CD4-positive, alpha-beta memory T cell (primary cell): ENCODE measurements at regions of chr12 and their contacts with region 1.

Region 1: GRCh38 chr12:5988659-5989116 is 43.6 kb upstream of the ANO2 start:
- DNase-seq: peak; percentile 47 to 60 (median 55)
- H3K4me3 ChIP-seq: no peak overlapping the region
- H3K4me3 Mint-ChIP-seq: no peak overlapping the region
- H3K27ac ChIP-seq: no peak overlapping the region
- H3K27ac Mint-ChIP-seq: no peak overlapping the region
- H3K4me1 ChIP-seq: no peaks in the 10 kb centered on the region
- H3K4me1 Mint-ChIP-seq: peaks cover 0 to 2% (median 0%) of the 10 kb centered on the region in 4 donors
- H3K27me3 ChIP-seq: no peaks in the 10 kb centered on the region
- H3K27me3 Mint-ChIP-seq: peaks cover 3 to 6% of the 10 kb centered on the region in 2 donors

Region 2: DNA sequence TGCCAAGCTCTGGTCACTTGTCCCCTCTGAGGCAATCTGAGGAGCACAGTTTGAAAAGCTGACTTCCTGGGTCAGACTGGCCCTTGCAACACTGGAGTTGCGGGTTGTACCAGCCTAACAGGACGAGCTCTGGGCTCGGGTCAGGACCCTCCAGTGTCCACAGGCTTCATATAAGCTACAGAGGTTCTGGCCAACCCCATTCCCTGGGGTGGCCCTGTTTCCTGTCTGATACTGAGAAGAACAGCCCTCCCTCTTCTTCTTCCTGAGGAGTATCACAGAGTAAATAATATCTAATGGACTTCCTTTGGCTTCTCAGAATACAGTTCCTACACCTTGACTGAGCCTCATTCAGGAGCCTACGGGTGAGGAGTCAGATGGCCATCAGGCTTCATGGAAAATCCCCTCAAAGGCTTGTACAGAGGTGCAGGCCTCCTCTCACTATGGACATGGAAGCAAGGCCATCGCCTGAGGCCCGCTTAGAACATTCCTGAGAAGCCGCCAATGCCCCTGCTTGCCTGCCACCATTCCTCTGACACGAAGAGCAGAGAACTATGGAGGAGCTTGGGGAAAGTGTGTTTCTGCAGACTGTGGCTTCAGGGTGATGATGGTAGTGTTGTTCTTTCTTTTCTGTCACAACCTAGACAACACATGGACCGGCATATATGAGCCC is 15.1 kb before region 1 on chr12:
- CTCF ChIA-PET with region 1: interaction called, 15 read pairs
- POLR2A ChIA-PET with region 1: no interaction called
- intact Hi-C with region 1: no loop called
- DNase-seq: no peak
- H3K4me3 ChIP-seq: no peak overlapping the region
- H3K4me3 Mint-ChIP-seq: no peak overlapping the region
- H3K27ac ChIP-seq: no peak overlapping the region
- H3K27ac Mint-ChIP-seq: no peak overlapping the region
- H3K4me1 ChIP-seq: no peaks in the 10 kb centered on the region
- H3K4me1 Mint-ChIP-seq: no peaks in the 10 kb centered on the region
- H3K27me3 ChIP-seq: no peaks in the 10 kb centered on the region
- H3K27me3 Mint-ChIP-seq: peaks cover 27 to 44% of the 10 kb centered on the region in 2 donors

Region 3: GRCh38 chr12:6039894-6040568 is 51.3 kb after region 1 on chr12:
- CTCF ChIA-PET with region 1: interaction called, 186 read pairs
- POLR2A ChIA-PET with region 1: no interaction called
- intact Hi-C with region 1: loop called (anchors 1 kb)
- DNase-seq: peak in 4 of 5 donors; percentile 41 to 55 (median 48)
- H3K4me3 ChIP-seq: no peak overlapping the region
- H3K4me3 Mint-ChIP-seq: peak overlapping the region in 3 of 8 donors; percentile 8 to 64 (median 13)
- H3K27ac ChIP-seq: no peak overlapping the region
- H3K27ac Mint-ChIP-seq: no peak overlapping the region
- H3K4me1 ChIP-seq: no peaks in the 10 kb centered on the region
- H3K4me1 Mint-ChIP-seq: peaks cover 0 to 2% (median under 1%) of the 10 kb centered on the region in 4 donors
- H3K27me3 ChIP-seq: no peaks in the 10 kb centered on the region
- H3K27me3 Mint-ChIP-seq: peaks cover 6 to 13% of the 10 kb centered on the region in 2 donors

Region 4: GRCh38 chr12:6278439-6279255 is 290.0 kb after region 1 on chr12:
- CTCF ChIA-PET with region 1: interaction called, 45 read pairs
- POLR2A ChIA-PET with region 1: no interaction called
- intact Hi-C with region 1: no loop called
- DNase-seq: peak; percentile 74 to 88 (median 81)
- H3K4me3 ChIP-seq: peak overlapping the region in 1 of 2 donors; percentile 43
- H3K4me3 Mint-ChIP-seq: peak overlapping the region; percentile 61 to 86 (median 80)
- H3K27ac ChIP-seq: no peak overlapping the region
- H3K27ac Mint-ChIP-seq: peak overlapping the region in 1 of 7 donors; percentile 54
- H3K4me1 ChIP-seq: peaks cover 11% of the 10 kb centered on the region
- H3K4me1 Mint-ChIP-seq: peaks cover 2 to 10% (median 4%) of the 10 kb centered on the region in 4 donors
- H3K27me3 ChIP-seq: no peaks in the 10 kb centered on the region
- H3K27me3 Mint-ChIP-seq: peaks cover 9 to 34% of the 10 kb centered on the region in 2 donors

Region 5: DNA sequence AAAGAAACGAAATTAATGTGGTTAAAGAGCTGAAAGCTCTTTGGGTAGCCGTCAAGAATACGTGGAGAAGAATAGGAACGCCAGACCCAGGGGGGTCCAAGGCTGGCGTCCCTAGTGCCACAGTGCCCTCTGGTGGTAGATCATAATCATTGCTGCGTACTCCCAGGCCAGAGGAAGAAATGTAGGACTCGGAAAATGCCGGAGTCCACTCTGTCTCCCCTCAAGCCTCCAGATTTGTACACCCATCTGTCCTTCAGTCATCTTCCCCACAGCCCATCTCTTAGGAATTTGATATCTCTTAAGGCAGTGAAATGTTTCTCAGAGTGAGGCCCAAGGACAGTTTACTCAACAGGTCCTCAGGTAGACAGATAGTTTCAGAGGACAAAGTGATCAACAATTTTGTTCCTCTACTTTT is 296.4 kb after region 1 on chr12:
- CTCF ChIA-PET with region 1: interaction called, 45 read pairs
- POLR2A ChIA-PET with region 1: no interaction called
- intact Hi-C with region 1: no loop called
- DNase-seq: peak in 4 of 5 donors; percentile 51 to 64 (median 55)
- H3K4me3 ChIP-seq: no peak overlapping the region
- H3K4me3 Mint-ChIP-seq: no peak overlapping the region
- H3K27ac ChIP-seq: no peak overlapping the region
- H3K27ac Mint-ChIP-seq: peak overlapping the region in 1 of 7 donors; percentile 31
- H3K4me1 ChIP-seq: peaks cover 4% of the 10 kb centered on the region
- H3K4me1 Mint-ChIP-seq: peaks cover 0 to 9% (median 4%) of the 10 kb centered on the region in 4 donors
- H3K27me3 ChIP-seq: no peaks in the 10 kb centered on the region
- H3K27me3 Mint-ChIP-seq: peaks cover 8 to 23% of the 10 kb centered on the region in 2 donors